ENCODE measurements at regions of chr22 and their contacts with region 1.

Region 1: DNA sequence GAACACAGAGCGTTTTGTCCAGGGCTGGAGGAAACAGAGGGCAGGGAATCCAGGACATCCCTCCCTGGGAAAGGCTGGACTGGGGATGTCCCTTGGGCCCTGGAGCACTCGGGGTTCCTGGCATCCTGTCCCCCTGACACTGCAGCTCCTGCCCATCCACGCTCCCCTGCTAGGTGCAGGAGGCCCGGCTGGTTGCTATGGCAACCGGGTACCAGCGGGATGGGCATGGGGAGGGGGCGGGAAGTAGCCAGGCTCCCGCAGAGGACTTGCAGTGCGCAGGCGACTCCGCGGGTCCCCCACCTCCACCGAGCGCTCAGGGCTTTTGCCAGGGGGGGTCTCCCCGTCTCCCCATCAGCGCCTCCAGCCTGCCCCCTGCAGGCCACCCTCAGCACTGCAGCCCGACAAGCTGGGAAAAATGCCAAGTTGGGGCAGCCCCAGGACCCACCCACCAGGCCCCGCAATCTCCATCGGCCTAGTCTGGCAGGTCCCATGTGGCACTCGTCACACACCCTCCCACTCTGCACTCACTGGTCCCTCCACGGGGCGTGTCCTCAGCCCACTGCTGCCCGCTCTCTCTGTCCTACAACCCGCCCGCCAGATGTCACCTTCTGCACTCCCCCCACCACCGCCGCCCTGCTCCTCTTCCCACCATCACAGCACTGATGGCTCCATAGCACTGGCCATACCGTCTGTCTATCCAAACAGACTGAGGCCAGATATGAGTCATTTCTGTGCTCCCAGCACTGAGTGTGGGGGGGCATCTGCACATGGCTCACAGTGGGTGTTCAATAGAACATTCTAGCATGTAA is 31.5 kb downstream of the KIAA0930 start:
- DNase-seq: peak; percentile 84
- ATAC-seq: peak; percentile 78
- H3K4me3 Mint-ChIP-seq: no peak overlapping the region
- H3K27ac Mint-ChIP-seq: no peak overlapping the region
- H3K4me1 Mint-ChIP-seq: peaks cover 21% of the 10 kb centered on the region
- H3K27me3 Mint-ChIP-seq: no peaks in the 10 kb centered on the region
- CTCF ChIP-seq: peak; percentile 90

Region 2: GRCh38 chr22:45101515-45102227 is 107.5 kb before region 1 on chr22:
- CTCF ChIA-PET with region 1: interaction called, 18 read pairs
- POLR2A ChIA-PET with region 1: no interaction called
- DNase-seq: peak; percentile 80
- ATAC-seq: peak; percentile 96
- H3K4me3 Mint-ChIP-seq: no peak overlapping the region
- H3K27ac Mint-ChIP-seq: no peak overlapping the region
- H3K4me1 Mint-ChIP-seq: peaks cover 6% of the 10 kb centered on the region; the same call in 1 of the 2 replicates
- H3K27me3 Mint-ChIP-seq: peaks cover 18% of the 10 kb centered on the region
- CTCF ChIP-seq: peak; percentile 32

Region 3: GRCh38 chr22:45192701-45193187 is 16.5 kb before region 1 on chr22:
- CTCF ChIA-PET with region 1: interaction called, 49 read pairs
- POLR2A ChIA-PET with region 1: no interaction called
- DNase-seq: peak; percentile 48
- ATAC-seq: peak; percentile 82
- H3K4me3 Mint-ChIP-seq: no peak overlapping the region; the same call in 1 of the 2 replicates
- H3K27ac Mint-ChIP-seq: no peak overlapping the region
- H3K4me1 Mint-ChIP-seq: peaks cover 24% of the 10 kb centered on the region
- H3K27me3 Mint-ChIP-seq: no peaks in the 10 kb centered on the region
- CTCF ChIP-seq: no peak

Region 4: GRCh38 chr22:45225732-45226526 is 16.7 kb after region 1 on chr22:
- CTCF ChIA-PET with region 1: interaction called, 17 read pairs
- POLR2A ChIA-PET with region 1: no interaction called
- DNase-seq: no peak
- ATAC-seq: peak; percentile 31; the same call in 1 of the 2 replicates
- H3K4me3 Mint-ChIP-seq: no peak overlapping the region
- H3K27ac Mint-ChIP-seq: no peak overlapping the region; the same call in 1 of the 2 replicates
- H3K4me1 Mint-ChIP-seq: peaks cover 26% of the 10 kb centered on the region
- H3K27me3 Mint-ChIP-seq: no peaks in the 10 kb centered on the region
- CTCF ChIP-seq: no peak

Region 5: GRCh38 chr22:45237065-45237990 is 28.1 kb after region 1 on chr22:
- CTCF ChIA-PET with region 1: interaction called, 11 read pairs
- POLR2A ChIA-PET with region 1: no interaction called
- DNase-seq: no peak
- ATAC-seq: no peak
- H3K4me3 Mint-ChIP-seq: no peak overlapping the region
- H3K27ac Mint-ChIP-seq: peak overlapping the region; percentile 32
- H3K4me1 Mint-ChIP-seq: peaks cover 20% of the 10 kb centered on the region
- H3K27me3 Mint-ChIP-seq: peaks cover 17% of the 10 kb centered on the region
- CTCF ChIP-seq: no peak

Region 6: GRCh38 chr22:45263463-45264269 is 54.5 kb after region 1 on chr22:
- CTCF ChIA-PET with region 1: interaction called, 12 read pairs
- POLR2A ChIA-PET with region 1: no interaction called
- DNase-seq: peak; percentile 73
- ATAC-seq: peak; percentile 59
- H3K4me3 Mint-ChIP-seq: no peak overlapping the region
- H3K27ac Mint-ChIP-seq: peak overlapping the region; percentile 2; the same call in 1 of the 2 replicates
- H3K4me1 Mint-ChIP-seq: peaks cover 14% of the 10 kb centered on the region
- H3K27me3 Mint-ChIP-seq: peaks cover 25% of the 10 kb centered on the region
- CTCF ChIP-seq: peak; percentile 29; the same call in 1 of the 2 replicates